ENCODE measurements at regions of chr3 and their contacts with region 1.

Region 1: DNA sequence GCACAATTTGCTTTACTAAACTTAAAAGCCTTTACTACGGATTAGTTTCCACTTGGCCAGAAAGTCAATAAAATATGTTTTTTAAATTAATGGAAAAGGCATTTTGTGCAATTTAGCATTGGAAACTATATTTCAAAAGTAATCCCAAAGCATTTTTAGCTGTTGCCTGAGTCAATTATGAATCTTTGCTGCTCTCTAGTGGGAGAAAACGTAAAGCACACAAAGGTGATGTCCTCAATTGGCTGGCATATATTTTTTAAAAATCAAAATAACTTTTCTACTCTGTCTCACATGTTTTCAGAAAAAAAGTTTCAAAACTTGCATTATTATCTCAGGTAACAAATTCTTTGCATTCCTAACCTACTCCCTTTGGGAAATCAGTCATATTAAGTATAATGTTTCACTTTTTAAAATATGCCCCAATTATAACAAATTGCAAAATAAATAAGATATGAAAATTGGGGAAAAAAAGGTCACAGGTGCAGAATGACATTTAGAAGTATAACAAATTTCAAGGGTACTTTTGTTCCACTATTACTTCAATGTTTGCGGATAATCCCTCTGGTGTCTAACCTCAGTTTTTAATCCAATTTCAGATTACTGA is 47.2 kb upstream of the TEX55 start:
- DNase-seq: no peak
- H3K4me3 ChIP-seq: no peak overlapping the region
- H3K27ac ChIP-seq: no peak overlapping the region
- H3K4me1 ChIP-seq: no peaks in the 10 kb centered on the region
- H3K27me3 ChIP-seq: no peaks in the 10 kb centered on the region
- CTCF ChIP-seq: peak in 2 of 3 experiments; percentile 66 to 70; a peak in 3 of 4 replicates
- EP300 ChIP-seq: no peak
- POLR2A ChIP-seq: no peak
- RAD21 ChIP-seq: peak; percentile 91 to 95

Region 2: GRCh38 chr3:118890186-118890585 is 208.5 kb before region 1 on chr3:
- CTCF ChIA-PET with region 1: interaction called, 619 read pairs
- POLR2A ChIA-PET with region 1: no interaction called
- DNase-seq: no peak
- H3K4me3 ChIP-seq: no peak overlapping the region
- H3K27ac ChIP-seq: no peak overlapping the region
- H3K4me1 ChIP-seq: no peaks in the 10 kb centered on the region
- H3K27me3 ChIP-seq: no peaks in the 10 kb centered on the region
- CTCF ChIP-seq: no peak
- EP300 ChIP-seq: no peak
- POLR2A ChIP-seq: no peak
- RAD21 ChIP-seq: no peak

Region 3: DNA sequence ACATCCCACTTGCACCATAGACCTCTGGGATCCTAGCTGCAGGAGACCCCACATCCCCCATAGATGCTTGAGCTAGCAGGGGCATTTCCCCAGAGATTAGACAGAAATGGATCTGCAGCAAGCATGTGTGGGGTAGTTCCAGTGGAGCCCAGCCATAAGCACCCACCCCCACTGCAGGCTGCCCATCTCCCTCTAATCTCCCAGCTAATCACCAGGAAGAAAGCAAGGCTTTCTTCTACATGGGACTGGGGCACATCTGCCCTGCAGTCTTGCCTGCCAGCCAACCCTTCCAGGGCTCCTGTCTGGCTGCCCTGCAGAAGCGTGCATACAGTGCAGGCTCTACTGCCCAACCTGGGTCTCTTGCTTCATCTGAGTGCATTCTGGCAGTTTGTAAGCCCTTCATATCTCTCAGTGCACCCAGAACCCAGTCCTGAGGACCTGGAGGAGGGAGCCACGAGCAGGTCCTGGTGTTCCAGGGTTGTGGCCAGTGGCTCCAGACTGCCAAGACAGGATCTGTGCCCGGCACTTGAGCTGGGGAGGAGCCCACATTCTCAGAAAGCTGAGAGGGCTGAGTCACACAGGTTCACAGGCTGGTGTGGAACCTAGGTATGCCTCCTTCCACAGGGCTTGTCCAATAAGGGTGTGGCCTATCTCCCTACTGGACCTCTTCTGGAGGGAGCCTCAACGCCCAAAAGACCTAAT is 14.2 kb before region 1 on chr3:
- CTCF ChIA-PET with region 1: interaction called, 23 read pairs
- POLR2A ChIA-PET with region 1: no interaction called
- DNase-seq: no peak
- H3K4me3 ChIP-seq: no peak overlapping the region
- H3K27ac ChIP-seq: no peak overlapping the region
- H3K4me1 ChIP-seq: no peaks in the 10 kb centered on the region
- H3K27me3 ChIP-seq: no peaks in the 10 kb centered on the region
- CTCF ChIP-seq: no peak
- EP300 ChIP-seq: no peak
- POLR2A ChIP-seq: no peak
- RAD21 ChIP-seq: no peak

Region 4: GRCh38 chr3:119140466-119140865 is 41.7 kb after region 1 on chr3:
- CTCF ChIA-PET with region 1: no interaction called
- POLR2A ChIA-PET with region 1: no interaction called
- DNase-seq: no peak
- H3K4me3 ChIP-seq: no peak overlapping the region
- H3K27ac ChIP-seq: no peak overlapping the region
- H3K4me1 ChIP-seq: no peaks in the 10 kb centered on the region
- H3K27me3 ChIP-seq: no peaks in the 10 kb centered on the region
- CTCF ChIP-seq: no peak
- EP300 ChIP-seq: no peak
- POLR2A ChIP-seq: no peak
- RAD21 ChIP-seq: no peak

Region 5: GRCh38 chr3:119331661-119332060 is 232.9 kb after region 1 on chr3:
- CTCF ChIA-PET with region 1: no interaction called
- POLR2A ChIA-PET with region 1: no interaction called
- DNase-seq: no peak
- H3K4me3 ChIP-seq: no peak overlapping the region
- H3K27ac ChIP-seq: no peak overlapping the region
- H3K4me1 ChIP-seq: peaks cover 0 to 3% (median 0%) of the 10 kb centered on the region in 4 experiments; a peak in 2 of 7 replicates
- H3K27me3 ChIP-seq: no peaks in the 10 kb centered on the region
- CTCF ChIP-seq: no peak
- EP300 ChIP-seq: no peak
- POLR2A ChIP-seq: no peak
- RAD21 ChIP-seq: no peak

Measured in H1 (cell line).